ENCODE measurements at regions of chr11 and their contacts with region 1.

Region 1: GRCh38 chr11:62665075-62665598 is at the starts of genes C11orf98 and CSKMT:
- DNase-seq: peak; percentile 94 to 96 (median 95)
- H3K4me3 ChIP-seq: peak within 1 kb of the TSS; percentile 88 to 97
- H3K4me3 Mint-ChIP-seq: peak within 1 kb of the TSS; percentile 92 to 98 (median 96)
- H3K27ac ChIP-seq: peak within 1 kb of the TSS; percentile 73
- H3K27ac Mint-ChIP-seq: peak within 1 kb of the TSS; percentile 95 to 98 (median 96)
- H3K4me1 ChIP-seq: peaks cover 42% of the 10 kb centered on the region
- H3K4me1 Mint-ChIP-seq: peaks cover 15 to 55% (median 31%) of the 10 kb centered on the region in 4 donors
- H3K27me3 ChIP-seq: no peaks in the 10 kb centered on the region
- H3K27me3 Mint-ChIP-seq: no peaks in the 10 kb centered on the region
- total RNA-seq, gene C11orf98: 48.9 to 53.1 TPM
- total RNA-seq, gene CSKMT: 31.4 to 32.3 TPM

Region 2: DNA sequence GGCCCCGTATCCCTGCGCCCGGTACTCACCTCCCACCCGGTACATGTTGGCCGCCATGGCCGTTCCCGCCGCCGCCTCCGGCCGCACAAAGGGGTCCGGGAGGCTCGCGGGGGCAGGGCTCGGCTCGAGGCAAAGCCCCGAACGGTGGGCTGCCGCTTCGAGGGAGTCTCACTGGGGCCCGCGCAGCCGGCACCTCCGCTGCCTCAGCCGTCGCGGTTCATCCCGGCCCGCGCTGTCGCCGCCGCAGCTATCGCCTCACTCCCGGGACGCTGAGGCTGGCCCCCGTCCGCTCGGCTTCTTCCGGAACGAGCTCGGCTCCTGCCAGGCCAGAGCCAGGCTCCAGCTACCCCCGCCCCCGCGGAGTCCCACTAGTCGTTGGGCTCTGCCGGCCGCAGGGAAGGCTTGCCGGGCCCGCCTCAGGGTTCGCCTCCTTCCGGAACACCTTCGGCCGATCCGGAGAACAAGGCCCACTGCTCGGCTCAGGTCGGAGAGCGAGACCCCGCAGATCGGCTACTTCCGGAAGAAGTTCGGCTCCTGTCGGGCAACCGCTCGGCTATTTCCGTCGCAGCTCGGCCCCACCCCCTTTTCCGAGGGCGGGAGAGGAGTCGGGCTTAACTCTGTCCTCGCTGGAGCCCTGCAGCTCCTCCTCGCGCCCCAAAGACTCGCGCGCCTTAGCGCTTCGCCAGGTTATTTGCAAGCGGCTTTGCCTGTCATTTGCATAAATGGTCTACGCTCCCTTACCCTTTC is 63.6 kb before region 1 on chr11 and contains the start of gene MTA2:
- CTCF ChIA-PET with region 1: interaction called, 4 read pairs
- POLR2A ChIA-PET with region 1: interaction called, 494 read pairs
- intact Hi-C with region 1: loop called (anchors 1 kb)
- DNase-seq: peak; percentile 99 to 100 (median 100)
- H3K4me3 ChIP-seq: peak within 1 kb of the TSS; percentile 71 to 82
- H3K4me3 Mint-ChIP-seq: peak within 1 kb of the TSS; percentile 91 to 99 (median 96)
- H3K27ac ChIP-seq: peak within 1 kb of the TSS; percentile 91
- H3K27ac Mint-ChIP-seq: peak within 1 kb of the TSS; percentile 90 to 99 (median 98)
- H3K4me1 ChIP-seq: peaks cover 35% of the 10 kb centered on the region
- H3K4me1 Mint-ChIP-seq: peaks cover 33 to 60% (median 46%) of the 10 kb centered on the region in 4 donors
- H3K27me3 ChIP-seq: no peaks in the 10 kb centered on the region
- H3K27me3 Mint-ChIP-seq: no peaks in the 10 kb centered on the region
- total RNA-seq, gene MTA2: 207 to 210 TPM

Region 3: GRCh38 chr11:62627714-62628113 is 37.4 kb before region 1 on chr11:
- CTCF ChIA-PET with region 1: no interaction called
- POLR2A ChIA-PET with region 1: interaction called, 53 read pairs
- intact Hi-C with region 1: loop called (anchors 2 kb)
- DNase-seq: no peak
- H3K4me3 ChIP-seq: no peak overlapping the region
- H3K4me3 Mint-ChIP-seq: no peak overlapping the region
- H3K27ac ChIP-seq: no peak overlapping the region
- H3K27ac Mint-ChIP-seq: peak overlapping the region in 6 of 7 donors; percentile 3 to 83 (median 52)
- H3K4me1 ChIP-seq: no peaks in the 10 kb centered on the region
- H3K4me1 Mint-ChIP-seq: peaks cover 0 to 4% (median 2%) of the 10 kb centered on the region in 4 donors
- H3K27me3 ChIP-seq: no peaks in the 10 kb centered on the region
- H3K27me3 Mint-ChIP-seq: no peaks in the 10 kb centered on the region

Region 4: DNA sequence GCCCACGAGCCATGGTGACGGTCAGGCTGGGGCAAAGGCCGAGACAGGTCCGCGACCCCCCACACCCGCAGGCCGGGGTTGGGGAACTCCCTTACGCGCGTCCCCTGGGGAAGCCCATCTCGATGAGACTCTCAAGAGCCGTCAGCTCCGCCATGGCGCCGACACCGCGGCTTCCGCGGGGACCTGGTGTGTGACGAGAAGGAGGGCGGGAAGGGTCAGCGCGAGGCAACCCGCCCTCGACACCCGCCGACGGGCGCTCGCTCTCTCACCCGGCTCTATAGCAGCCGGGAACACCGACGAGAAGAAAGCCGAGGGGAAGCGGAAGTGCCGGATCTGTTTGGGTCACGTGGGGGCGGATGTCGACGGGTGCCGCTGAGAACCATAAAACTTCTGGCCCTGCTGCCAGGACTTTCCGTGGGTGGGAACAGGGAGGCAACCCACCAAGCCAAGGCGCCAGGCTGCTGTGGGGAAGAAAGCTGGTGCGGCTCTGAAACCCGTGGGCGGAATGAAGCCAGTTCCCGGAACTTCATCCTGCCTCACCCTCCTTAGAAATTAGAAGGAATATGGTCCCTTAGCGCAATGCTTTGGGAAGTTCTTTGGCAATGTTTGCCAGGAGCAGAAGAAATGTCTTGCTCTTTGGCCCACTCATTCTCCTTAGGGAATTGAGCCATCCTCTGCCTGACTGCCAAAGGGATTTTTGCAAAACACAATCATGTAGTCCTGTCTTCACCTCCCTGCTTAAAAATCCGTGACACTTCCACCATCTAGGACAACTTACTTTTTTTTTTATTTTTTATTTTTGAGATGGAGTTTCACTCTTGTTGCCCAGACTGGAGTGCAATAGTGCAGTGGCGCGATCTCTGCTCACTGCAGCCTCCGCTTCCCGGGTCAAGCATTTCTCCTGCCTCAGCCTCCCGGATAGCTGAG is 13.9 kb after region 1 on chr11 and contains the start of gene UBXN1:
- CTCF ChIA-PET with region 1: interaction called, 10 read pairs
- POLR2A ChIA-PET with region 1: interaction called, 156 read pairs
- intact Hi-C with region 1: loop called (anchors 2 kb)
- DNase-seq: peak; percentile 80 to 90 (median 82)
- H3K4me3 ChIP-seq: peak within 1 kb of the TSS; percentile 58 to 95
- H3K4me3 Mint-ChIP-seq: peak within 1 kb of the TSS; percentile 87 to 98 (median 92)
- H3K27ac ChIP-seq: peak within 1 kb of the TSS; percentile 98
- H3K27ac Mint-ChIP-seq: peak within 1 kb of the TSS; percentile 86 to 99 (median 95)
- H3K4me1 ChIP-seq: peaks cover 37% of the 10 kb centered on the region
- H3K4me1 Mint-ChIP-seq: peaks cover 16 to 50% (median 31%) of the 10 kb centered on the region in 4 donors
- H3K27me3 ChIP-seq: no peaks in the 10 kb centered on the region
- H3K27me3 Mint-ChIP-seq: no peaks in the 10 kb centered on the region
- total RNA-seq, gene UBXN1: 178 to 185 TPM

Region 5: GRCh38 chr11:62753736-62754603 is 88.8 kb after region 1 on chr11 and contains the start of gene ZBTB3:
- CTCF ChIA-PET with region 1: interaction called, 3 read pairs
- POLR2A ChIA-PET with region 1: interaction called, 26 read pairs
- intact Hi-C with region 1: no loop called
- DNase-seq: peak; percentile 99
- H3K4me3 ChIP-seq: peak within 1 kb of the TSS; percentile 68 to 98
- H3K4me3 Mint-ChIP-seq: peak within 1 kb of the TSS; percentile 96 to 99 (median 98)
- H3K27ac ChIP-seq: peak within 1 kb of the TSS; percentile 90
- H3K27ac Mint-ChIP-seq: peak within 1 kb of the TSS; percentile 94 to 100 (median 99)
- H3K4me1 ChIP-seq: peaks cover 45% of the 10 kb centered on the region
- H3K4me1 Mint-ChIP-seq: peaks cover 15 to 41% (median 25%) of the 10 kb centered on the region in 4 donors
- H3K27me3 ChIP-seq: no peaks in the 10 kb centered on the region
- H3K27me3 Mint-ChIP-seq: no peaks in the 10 kb centered on the region
- total RNA-seq, gene ZBTB3: 27.2 to 27.9 TPM

Region 6: GRCh38 chr11:62841361-62842184 is 176.4 kb after region 1 on chr11:
- CTCF ChIA-PET with region 1: no interaction called
- POLR2A ChIA-PET with region 1: interaction called, 32 read pairs
- intact Hi-C with region 1: no loop called
- DNase-seq: peak; percentile 88 to 92 (median 90)
- H3K4me3 ChIP-seq: peak overlapping the region; percentile 74 to 86
- H3K4me3 Mint-ChIP-seq: no peak overlapping the region
- H3K27ac ChIP-seq: peak overlapping the region; percentile 98
- H3K27ac Mint-ChIP-seq: no peak overlapping the region
- H3K4me1 ChIP-seq: peaks cover 32% of the 10 kb centered on the region
- H3K4me1 Mint-ChIP-seq: peaks cover 10 to 34% (median 21%) of the 10 kb centered on the region in 4 donors
- H3K27me3 ChIP-seq: no peaks in the 10 kb centered on the region
- H3K27me3 Mint-ChIP-seq: no peaks in the 10 kb centered on the region